ENCODE measurements at regions of chr4 and their contacts with region 1.

Region 1: GRCh38 chr4:90780193-90780592 is 653.0 kb downstream of the CCSER1 start:
- DNase-seq: no peak
- H3K4me3 ChIP-seq: no peak overlapping the region
- H3K4me3 Mint-ChIP-seq: no peak overlapping the region
- H3K27ac Mint-ChIP-seq: no peak overlapping the region
- H3K4me1 ChIP-seq: no peaks in the 10 kb centered on the region
- H3K4me1 Mint-ChIP-seq: no peaks in the 10 kb centered on the region
- H3K27me3 ChIP-seq: no peaks in the 10 kb centered on the region
- H3K27me3 Mint-ChIP-seq: no peaks in the 10 kb centered on the region
- CTCF ChIP-seq: no peak

Region 2: GRCh38 chr4:90816754-90817153 is 36.6 kb after region 1 on chr4:
- CTCF ChIA-PET with region 1: no interaction called
- POLR2A ChIA-PET with region 1: no interaction called
- intact Hi-C with region 1: loop called (anchors 1 kb)
- DNase-seq: no peak
- H3K4me3 ChIP-seq: no peak overlapping the region
- H3K4me3 Mint-ChIP-seq: no peak overlapping the region
- H3K27ac Mint-ChIP-seq: no peak overlapping the region
- H3K4me1 ChIP-seq: no peaks in the 10 kb centered on the region
- H3K4me1 Mint-ChIP-seq: no peaks in the 10 kb centered on the region
- H3K27me3 ChIP-seq: no peaks in the 10 kb centered on the region
- H3K27me3 Mint-ChIP-seq: no peaks in the 10 kb centered on the region
- CTCF ChIP-seq: no peak

Region 3: GRCh38 chr4:90876296-90876695 is 96.1 kb after region 1 on chr4:
- CTCF ChIA-PET with region 1: no interaction called
- POLR2A ChIA-PET with region 1: no interaction called
- intact Hi-C with region 1: no loop called
- DNase-seq: no peak
- H3K4me3 ChIP-seq: no peak overlapping the region
- H3K4me3 Mint-ChIP-seq: no peak overlapping the region
- H3K27ac Mint-ChIP-seq: no peak overlapping the region
- H3K4me1 ChIP-seq: no peaks in the 10 kb centered on the region
- H3K4me1 Mint-ChIP-seq: no peaks in the 10 kb centered on the region
- H3K27me3 ChIP-seq: no peaks in the 10 kb centered on the region
- H3K27me3 Mint-ChIP-seq: no peaks in the 10 kb centered on the region
- CTCF ChIP-seq: no peak